Esophagus muscularis mucosa (tissue), 4 donors: ENCODE measurements at regions of chr17 and their contacts with region 1.

Region 1: DNA sequence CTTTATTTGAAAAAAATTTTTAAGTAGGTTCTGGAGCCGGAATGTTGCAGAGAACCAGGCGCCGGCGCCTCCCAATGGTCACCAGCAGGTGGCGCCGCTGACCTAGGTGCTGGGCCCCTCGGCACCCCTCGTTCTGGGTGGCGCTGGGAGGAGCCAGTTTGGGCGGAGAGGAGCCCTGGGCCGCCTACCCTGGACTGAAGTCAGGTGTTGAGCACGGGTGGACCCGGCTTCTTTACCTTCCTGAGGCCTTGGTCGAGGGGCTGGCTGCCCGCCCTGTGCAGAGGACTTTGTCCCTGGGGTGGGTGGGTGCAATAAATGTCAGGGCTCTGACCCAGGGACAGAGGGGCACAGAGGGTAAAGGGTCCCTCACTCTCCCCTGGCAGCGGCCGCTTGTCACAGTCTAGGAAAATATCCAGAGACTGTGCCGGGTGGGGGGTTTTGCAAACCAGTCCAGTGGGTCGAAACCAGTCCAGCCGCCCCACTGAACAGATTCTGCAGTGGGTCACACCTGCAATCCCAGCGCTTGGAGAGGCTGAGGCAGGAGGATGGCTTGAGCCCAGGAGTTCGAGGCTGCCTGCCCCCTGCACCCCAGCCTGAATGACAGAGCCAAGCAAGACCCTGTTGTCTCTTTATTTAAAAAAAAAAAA is 30.1 kb upstream of the TNFRSF13B start:
- DNase-seq: no peak
- H3K4me3 ChIP-seq: peak overlapping the region in 2 of 4 donors; percentile 19 to 28
- H3K27ac ChIP-seq: no peak overlapping the region
- H3K4me1 ChIP-seq: peaks cover 0 to 10% (median 9%) of the 10 kb centered on the region in 4 donors
- H3K27me3 ChIP-seq: no peaks in the 10 kb centered on the region
- CTCF ChIP-seq: peak; percentile 90 to 98 (median 95)
- EP300 ChIP-seq: no peak
- POLR2A ChIP-seq: no peak

Region 2: GRCh38 chr17:16886655-16887322 is 115.2 kb before region 1 on chr17:
- intact Hi-C with region 1: no loop called
- DNase-seq: peak; percentile 90
- H3K4me3 ChIP-seq: no peak overlapping the region
- H3K27ac ChIP-seq: no peak overlapping the region
- H3K4me1 ChIP-seq: no peaks in the 10 kb centered on the region
- H3K27me3 ChIP-seq: no peaks in the 10 kb centered on the region
- CTCF ChIP-seq: no peak
- EP300 ChIP-seq: no peak
- POLR2A ChIP-seq: no peak

Region 3: GRCh38 chr17:17151962-17152361 is 150.0 kb after region 1 on chr17:
- intact Hi-C with region 1: loop called (anchors 10 kb)
- DNase-seq: peak; percentile 95
- H3K4me3 ChIP-seq: no peak overlapping the region
- H3K27ac ChIP-seq: peak overlapping the region; percentile 66 to 79 (median 75)
- H3K4me1 ChIP-seq: peaks cover 22 to 36% (median 30%) of the 10 kb centered on the region in 4 donors
- H3K27me3 ChIP-seq: no peaks in the 10 kb centered on the region
- CTCF ChIP-seq: no peak
- EP300 ChIP-seq: no peak
- POLR2A ChIP-seq: no peak

Region 4: GRCh38 chr17:17313350-17313991 is 311.5 kb after region 1 on chr17:
- intact Hi-C with region 1: loop called (anchors 10 kb)
- DNase-seq: no peak
- H3K4me3 ChIP-seq: no peak overlapping the region
- H3K27ac ChIP-seq: no peak overlapping the region
- H3K4me1 ChIP-seq: no peaks in the 10 kb centered on the region
- H3K27me3 ChIP-seq: no peaks in the 10 kb centered on the region
- CTCF ChIP-seq: peak; percentile 25 to 48 (median 31)
- EP300 ChIP-seq: no peak
- POLR2A ChIP-seq: no peak